CD4-positive, alpha-beta memory T cell (primary cell): ENCODE measurements at regions of chr1 and their contacts with region 1.

Region 1: DNA sequence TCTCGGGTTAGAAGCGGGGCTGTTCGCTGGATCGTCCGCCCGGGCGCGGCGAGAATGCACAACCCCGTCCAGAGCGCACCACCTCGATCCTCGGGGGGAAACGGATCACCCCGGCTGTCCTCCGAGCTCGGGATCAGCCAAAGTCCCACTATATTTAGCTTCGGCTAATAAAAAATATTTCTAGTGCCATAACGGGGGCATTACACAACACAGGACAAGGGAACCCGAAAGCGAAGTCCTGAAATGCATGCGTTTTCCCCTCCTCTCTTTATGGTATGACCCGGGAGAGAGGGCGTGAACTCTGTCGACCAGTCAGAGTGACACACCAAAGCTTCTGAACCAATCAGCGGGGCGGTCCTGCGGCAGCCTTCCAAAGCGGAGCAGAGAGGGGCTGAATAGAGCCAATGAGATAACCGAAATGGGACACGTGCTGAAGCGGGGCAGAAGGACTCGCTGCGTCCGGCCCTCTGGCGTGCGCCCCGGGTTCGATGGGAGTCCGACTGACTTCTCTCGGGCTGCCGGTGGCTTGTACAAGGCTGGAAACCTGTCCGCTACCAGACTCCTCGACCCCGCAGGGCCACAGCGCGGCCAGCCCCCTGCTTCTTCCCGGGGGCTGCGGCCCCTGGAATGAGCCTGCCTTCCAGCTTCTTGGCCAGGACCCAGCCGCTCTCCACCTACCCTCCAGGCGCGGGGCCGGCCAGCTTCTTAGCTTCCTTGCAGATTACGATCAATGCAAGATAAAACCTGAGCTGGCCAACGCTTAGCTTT is at the start of gene ALDH4A1:
- DNase-seq: peak; percentile 93 to 97 (median 94)
- H3K4me3 ChIP-seq: peak within 1 kb of the TSS; percentile 47 to 67
- H3K4me3 Mint-ChIP-seq: peak within 1 kb of the TSS; percentile 90 to 96 (median 92)
- H3K27ac ChIP-seq: peak within 1 kb of the TSS; percentile 66
- H3K27ac Mint-ChIP-seq: peak within 1 kb of the TSS; percentile 92 to 99 (median 97)
- H3K4me1 ChIP-seq: peaks cover 23% of the 10 kb centered on the region
- H3K4me1 Mint-ChIP-seq: peaks cover 11 to 45% (median 22%) of the 10 kb centered on the region in 4 donors
- H3K27me3 ChIP-seq: no peaks in the 10 kb centered on the region
- H3K27me3 Mint-ChIP-seq: no peaks in the 10 kb centered on the region
- total RNA-seq, gene ALDH4A1: 1.4 to 1.5 TPM

Region 2: DNA sequence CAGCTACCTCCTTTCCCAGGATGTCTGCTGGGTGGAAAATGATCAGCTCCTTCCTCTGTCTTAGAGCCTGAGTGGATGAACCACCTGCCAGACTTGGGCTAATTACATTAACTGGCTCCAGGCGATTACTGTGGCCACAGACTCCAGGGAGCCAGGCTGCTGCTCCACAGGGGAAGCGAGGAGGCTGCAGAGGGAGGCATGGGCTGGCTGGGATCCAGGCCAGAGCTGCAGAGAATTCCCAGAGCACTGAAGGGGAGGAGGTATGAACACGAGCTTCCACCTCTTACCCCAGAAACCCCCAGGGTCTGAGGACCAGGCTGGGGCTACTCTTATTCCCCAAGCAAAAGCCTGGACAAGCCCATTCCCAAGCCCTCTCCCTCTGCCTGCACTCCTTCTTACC is 558.0 kb before region 1 on chr1:
- CTCF ChIA-PET with region 1: no interaction called
- POLR2A ChIA-PET with region 1: no interaction called
- intact Hi-C with region 1: no loop called
- DNase-seq: no peak
- H3K4me3 ChIP-seq: no peak overlapping the region
- H3K4me3 Mint-ChIP-seq: no peak overlapping the region
- H3K27ac ChIP-seq: no peak overlapping the region
- H3K27ac Mint-ChIP-seq: no peak overlapping the region
- H3K4me1 ChIP-seq: no peaks in the 10 kb centered on the region
- H3K4me1 Mint-ChIP-seq: no peaks in the 10 kb centered on the region
- H3K27me3 ChIP-seq: no peaks in the 10 kb centered on the region
- H3K27me3 Mint-ChIP-seq: peaks cover 5 to 15% of the 10 kb centered on the region in 2 donors

Region 3: GRCh38 chr1:18883636-18884418 is 18.9 kb before region 1 on chr1:
- CTCF ChIA-PET with region 1: interaction called, 33 read pairs
- POLR2A ChIA-PET with region 1: interaction called, 9 read pairs
- intact Hi-C with region 1: loop called (anchors 1 kb)
- DNase-seq: peak; percentile 55 to 68 (median 58)
- H3K4me3 ChIP-seq: no peak overlapping the region
- H3K4me3 Mint-ChIP-seq: no peak overlapping the region
- H3K27ac ChIP-seq: no peak overlapping the region
- H3K27ac Mint-ChIP-seq: peak overlapping the region in 1 of 7 donors; percentile 38
- H3K4me1 ChIP-seq: no peaks in the 10 kb centered on the region
- H3K4me1 Mint-ChIP-seq: peaks cover 0 to 5% (median 0%) of the 10 kb centered on the region in 4 donors
- H3K27me3 ChIP-seq: no peaks in the 10 kb centered on the region
- H3K27me3 Mint-ChIP-seq: no peaks in the 10 kb centered on the region

Region 4: DNA sequence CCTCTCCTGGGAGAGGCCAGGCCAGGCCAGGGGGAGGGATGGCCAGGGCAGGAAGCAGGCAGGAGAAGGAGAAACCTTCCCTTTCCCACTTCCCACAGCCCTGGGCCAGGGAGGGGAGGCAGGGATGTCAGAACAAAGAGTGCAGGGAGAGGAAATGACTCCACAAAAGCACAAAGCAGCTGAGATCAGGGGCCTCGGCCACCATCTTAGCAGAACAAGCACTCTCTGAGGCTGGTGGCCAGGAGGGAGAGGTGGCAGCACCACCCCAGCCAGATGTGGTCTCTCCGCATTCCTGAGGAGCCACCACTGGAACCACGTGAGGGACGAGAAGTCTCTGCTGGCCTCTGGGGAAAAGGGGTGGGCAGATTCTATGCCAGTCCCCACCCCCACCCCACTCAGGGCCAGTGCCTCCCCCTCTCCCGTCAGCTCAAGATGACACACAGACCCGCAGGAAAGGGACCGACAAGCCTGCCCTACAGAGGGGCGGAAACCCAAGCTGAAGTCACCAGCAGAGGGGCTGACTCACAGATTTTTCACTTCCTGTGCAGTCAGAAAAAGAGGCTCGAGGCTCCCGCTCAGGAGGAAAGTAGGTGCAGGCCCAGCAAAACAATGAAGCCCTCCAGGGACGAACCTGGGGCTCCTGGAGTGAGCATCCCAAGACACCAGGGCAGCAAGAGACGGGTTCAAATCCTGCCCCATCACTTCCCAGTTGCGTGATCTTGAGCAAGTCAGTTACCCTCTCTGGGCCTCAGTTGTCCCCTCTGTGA is 23.8 kb after region 1 on chr1:
- CTCF ChIA-PET with region 1: interaction called, 193 read pairs
- POLR2A ChIA-PET with region 1: interaction called, 34 read pairs
- intact Hi-C with region 1: no loop called
- DNase-seq: peak; percentile 75 to 95 (median 78)
- H3K4me3 ChIP-seq: peak overlapping the region; percentile 45 to 58
- H3K4me3 Mint-ChIP-seq: peak overlapping the region; percentile 78 to 89 (median 84)
- H3K27ac ChIP-seq: peak overlapping the region; percentile 75
- H3K27ac Mint-ChIP-seq: peak overlapping the region; percentile 87 to 99 (median 98)
- H3K4me1 ChIP-seq: peaks cover 99% of the 10 kb centered on the region
- H3K4me1 Mint-ChIP-seq: peaks cover 48 to 98% (median 83%) of the 10 kb centered on the region in 4 donors
- H3K27me3 ChIP-seq: no peaks in the 10 kb centered on the region
- H3K27me3 Mint-ChIP-seq: no peaks in the 10 kb centered on the region

Region 5: DNA sequence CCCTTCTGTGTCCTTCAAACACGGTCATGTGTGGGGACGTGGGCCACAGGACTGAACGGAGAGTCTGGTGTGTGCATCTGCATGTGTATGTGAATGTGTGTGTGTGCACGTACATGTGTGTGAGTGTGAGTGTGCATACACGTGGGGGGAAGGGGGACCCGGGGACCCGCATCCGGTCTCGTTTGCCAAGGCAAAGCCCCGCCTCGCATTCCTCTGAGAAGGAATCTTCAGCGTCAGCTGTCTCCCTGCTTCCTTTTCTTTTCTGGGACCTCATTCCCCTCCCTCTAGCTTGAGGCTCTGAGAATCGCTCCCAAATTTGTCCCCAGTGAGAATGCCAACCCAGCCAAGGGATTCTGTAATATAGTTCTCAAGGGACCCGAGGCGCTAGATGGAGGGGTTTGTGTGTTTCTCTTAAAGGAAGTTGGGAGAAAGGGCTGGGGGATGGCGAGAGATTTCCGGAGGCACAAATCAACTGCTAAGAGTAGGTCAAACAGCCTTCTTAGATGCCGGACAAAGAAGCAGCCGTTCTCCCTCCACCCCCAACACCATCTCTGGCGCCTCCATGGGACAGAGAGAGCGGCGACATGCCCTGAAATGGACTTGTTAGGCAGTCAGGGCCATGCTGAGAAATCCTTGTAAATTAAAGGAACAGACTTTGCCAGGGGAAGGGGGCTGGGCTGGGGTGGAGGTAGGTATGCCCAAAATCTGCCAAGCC is 47.1 kb after region 1 on chr1:
- CTCF ChIA-PET with region 1: interaction called, 206 read pairs
- POLR2A ChIA-PET with region 1: interaction called, 55 read pairs
- intact Hi-C with region 1: no loop called
- DNase-seq: no peak
- H3K4me3 ChIP-seq: peak overlapping the region; percentile 59 to 65
- H3K4me3 Mint-ChIP-seq: peak overlapping the region; percentile 91 to 98 (median 94)
- H3K27ac ChIP-seq: peak overlapping the region; percentile 98
- H3K27ac Mint-ChIP-seq: peak overlapping the region; percentile 98 to 100 (median 100)
- H3K4me1 ChIP-seq: peaks cover 100% of the 10 kb centered on the region
- H3K4me1 Mint-ChIP-seq: peaks cover 66 to 98% (median 87%) of the 10 kb centered on the region in 4 donors
- H3K27me3 ChIP-seq: no peaks in the 10 kb centered on the region
- H3K27me3 Mint-ChIP-seq: no peaks in the 10 kb centered on the region

Region 6: DNA sequence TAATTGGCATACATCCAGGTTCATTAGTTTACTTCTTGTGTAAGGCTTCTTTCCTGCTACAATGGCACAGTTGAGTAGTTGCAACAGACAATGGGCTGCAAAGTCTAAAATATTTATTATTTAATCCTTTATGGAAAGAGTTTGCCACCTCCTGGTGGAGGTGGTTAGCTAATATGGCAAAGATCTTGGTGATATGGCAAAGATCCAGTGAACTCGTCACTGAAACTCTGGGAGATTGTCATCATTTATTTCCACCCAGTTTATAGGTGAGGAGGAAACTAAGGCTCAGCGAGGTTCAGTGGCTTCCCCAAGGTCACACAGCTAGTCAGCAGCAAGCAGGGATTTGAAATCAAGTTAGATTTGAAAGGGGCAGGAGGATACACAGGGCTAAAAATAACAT is 69.8 kb after region 1 on chr1:
- CTCF ChIA-PET with region 1: interaction called, 443 read pairs
- POLR2A ChIA-PET with region 1: interaction called, 19 read pairs
- intact Hi-C with region 1: loop called (anchors 1 kb)
- DNase-seq: peak; percentile 57 to 64 (median 61)
- H3K4me3 ChIP-seq: no peak overlapping the region
- H3K4me3 Mint-ChIP-seq: no peak overlapping the region
- H3K27ac ChIP-seq: no peak overlapping the region
- H3K27ac Mint-ChIP-seq: peak overlapping the region in 1 of 7 donors; percentile 74
- H3K4me1 ChIP-seq: no peaks in the 10 kb centered on the region
- H3K4me1 Mint-ChIP-seq: peaks cover 1 to 8% (median 3%) of the 10 kb centered on the region in 4 donors
- H3K27me3 ChIP-seq: no peaks in the 10 kb centered on the region
- H3K27me3 Mint-ChIP-seq: no peaks in the 10 kb centered on the region

Region 7: DNA sequence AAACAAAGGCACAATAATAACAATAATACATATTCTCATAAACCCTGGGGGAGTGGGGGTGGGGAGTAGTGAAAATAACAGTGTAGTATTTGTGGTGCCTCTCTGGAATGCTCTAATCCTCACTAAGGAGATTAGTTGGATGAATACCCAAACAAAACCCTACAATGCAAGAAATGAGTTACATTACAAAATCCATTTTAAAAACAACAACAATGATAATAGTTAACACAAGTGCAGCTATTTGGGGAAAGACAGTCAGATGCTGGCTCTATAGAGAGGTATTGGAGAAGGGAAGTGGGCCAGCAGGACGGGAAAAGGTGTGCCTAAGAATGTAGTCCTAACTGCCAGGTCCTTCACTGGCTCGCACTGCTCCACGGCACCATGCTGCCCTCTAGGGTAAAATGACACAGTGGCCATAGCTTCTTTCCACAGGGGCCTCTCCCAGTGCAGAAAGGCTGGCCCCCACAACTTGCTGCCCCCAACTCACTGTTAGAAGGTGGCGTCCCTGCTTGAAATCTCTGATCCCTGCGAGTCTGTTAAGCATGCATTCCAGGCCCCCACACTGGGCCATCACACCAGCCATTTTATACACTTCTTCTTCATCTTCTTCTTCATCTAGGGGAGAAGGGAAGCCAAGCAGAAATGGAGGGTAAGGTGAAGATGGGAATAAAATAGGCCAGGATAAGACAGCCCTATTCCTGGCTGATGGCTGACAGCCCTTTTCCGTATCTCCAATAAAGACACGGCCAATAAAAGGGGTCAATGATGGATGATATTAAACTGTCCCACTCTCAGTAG is 193.5 kb after region 1 on chr1:
- CTCF ChIA-PET with region 1: interaction called, 18 read pairs
- POLR2A ChIA-PET with region 1: no interaction called
- intact Hi-C with region 1: loop called (anchors 1 kb)
- DNase-seq: peak in 3 of 5 donors; percentile 9 to 25 (median 15)
- H3K4me3 ChIP-seq: no peak overlapping the region
- H3K4me3 Mint-ChIP-seq: no peak overlapping the region
- H3K27ac ChIP-seq: no peak overlapping the region
- H3K27ac Mint-ChIP-seq: peak overlapping the region in 2 of 7 donors; percentile 7 to 69
- H3K4me1 ChIP-seq: no peaks in the 10 kb centered on the region
- H3K4me1 Mint-ChIP-seq: no peaks in the 10 kb centered on the region
- H3K27me3 ChIP-seq: no peaks in the 10 kb centered on the region
- H3K27me3 Mint-ChIP-seq: no peaks in the 10 kb centered on the region